Right lobe of liver (tissue), 6 donors: ENCODE measurements at regions of chr1 and their contacts with region 1.

Region 1: GRCh38 chr1:151739590-151740375 is 18.5 kb downstream of the RIIAD1 start:
- DNase-seq: no peak
- ATAC-seq: peak; percentile 64 to 81 (median 72)
- H3K4me3 ChIP-seq: no peak overlapping the region
- H3K27ac ChIP-seq: peak overlapping the region in 1 of 3 donors; percentile 36
- H3K4me1 ChIP-seq: peaks cover 0 to 23% (median 8%) of the 10 kb centered on the region in 4 donors
- H3K27me3 ChIP-seq: no peaks in the 10 kb centered on the region
- CTCF ChIP-seq: peak in 3 of 4 donors; percentile 8 to 29 (median 17)
- POLR2A ChIP-seq: no peak

Region 2: GRCh38 chr1:151594143-151594625 is 145.6 kb before region 1 on chr1:
- intact Hi-C with region 1: loop called in 1 of 2 experiments (anchors 10 kb)
- DNase-seq: peak; percentile 87 to 91 (median 88)
- ATAC-seq: peak; percentile 87 to 98 (median 95)
- H3K4me3 ChIP-seq: no peak overlapping the region
- H3K27ac ChIP-seq: no peak overlapping the region
- H3K4me1 ChIP-seq: no peaks in the 10 kb centered on the region
- H3K27me3 ChIP-seq: no peaks in the 10 kb centered on the region
- CTCF ChIP-seq: peak; percentile 79 to 97 (median 96)
- POLR2A ChIP-seq: no peak